ENCODE measurements at regions of chr15 and their contacts with region 1.

Region 1: DNA sequence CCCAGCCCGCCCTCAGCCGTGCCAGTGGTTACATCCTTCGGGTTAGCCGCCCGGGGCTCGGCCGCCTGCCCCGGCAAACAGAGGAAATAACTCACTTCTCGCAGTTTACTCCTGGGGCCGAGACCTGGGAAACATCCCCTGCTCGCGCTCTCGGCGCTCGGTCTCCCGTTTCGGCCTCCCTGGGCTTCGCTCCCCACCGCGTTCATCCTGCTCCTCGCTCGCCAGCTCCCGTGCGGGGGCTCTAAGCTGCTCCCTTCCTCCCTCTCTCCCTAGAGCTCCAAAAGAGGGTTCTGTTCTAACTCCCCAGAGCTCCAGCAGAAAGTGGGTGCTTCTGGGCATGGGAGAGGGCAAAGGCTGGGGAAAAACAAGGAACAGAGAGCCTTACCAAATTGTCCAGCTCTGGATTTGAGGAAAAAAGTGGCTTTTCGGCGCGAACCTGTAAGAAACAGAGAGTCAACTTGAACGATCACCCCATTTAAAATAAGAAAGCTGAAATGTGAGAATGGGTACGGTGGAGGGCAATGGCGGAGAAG is 5.1 kb downstream of the MEIS2 start:
- DNase-seq: no peak
- H3K4me3 ChIP-seq: no peak overlapping the region
- H3K27ac ChIP-seq: no peak overlapping the region
- H3K4me1 ChIP-seq: no peaks in the 10 kb centered on the region
- H3K27me3 ChIP-seq: no peaks in the 10 kb centered on the region
- CTCF ChIP-seq: no peak

Region 2: DNA sequence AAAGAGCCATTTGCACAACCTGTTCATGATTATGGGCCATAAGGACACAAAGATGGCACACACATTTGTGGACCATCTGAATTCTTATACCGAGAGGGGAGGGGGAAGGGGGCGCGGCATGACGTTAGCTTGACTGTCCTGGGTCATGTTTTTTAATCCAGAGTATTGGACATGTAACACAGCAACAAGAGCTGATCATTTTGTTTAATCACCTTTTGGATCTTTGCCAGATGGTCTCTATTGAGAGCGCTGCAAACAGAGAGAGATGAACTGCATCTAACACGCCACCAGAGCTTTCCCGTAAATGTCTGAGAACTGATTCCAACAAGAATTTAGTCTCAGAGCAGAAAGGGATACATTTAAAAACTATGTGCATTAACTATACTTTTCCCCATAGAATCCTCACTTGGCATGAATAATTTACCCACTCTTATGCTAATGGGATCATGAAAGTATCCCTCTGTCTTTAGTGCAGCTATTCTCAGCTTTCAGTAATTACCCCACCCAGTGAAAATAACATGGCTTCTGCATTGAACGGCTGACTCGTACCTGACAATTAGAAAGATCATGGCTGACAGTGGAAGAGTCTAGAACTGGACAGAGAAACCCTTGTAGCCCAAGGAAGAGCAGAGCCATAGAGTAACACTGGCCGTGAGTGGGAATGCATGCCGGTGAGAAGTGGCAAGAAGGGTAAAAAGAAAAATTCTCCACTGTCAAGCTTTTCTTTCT is 17.5 kb before region 1 on chr15:
- CTCF ChIA-PET with region 1: interaction called, 11 read pairs
- POLR2A ChIA-PET with region 1: no interaction called
- intact Hi-C with region 1: no loop called
- DNase-seq: no peak
- H3K4me3 ChIP-seq: no peak overlapping the region
- H3K27ac ChIP-seq: no peak overlapping the region
- H3K4me1 ChIP-seq: no peaks in the 10 kb centered on the region
- H3K27me3 ChIP-seq: no peaks in the 10 kb centered on the region
- CTCF ChIP-seq: no peak